ENCODE measurements at regions of chr2 and their contacts with region 1.

Region 1: DNA sequence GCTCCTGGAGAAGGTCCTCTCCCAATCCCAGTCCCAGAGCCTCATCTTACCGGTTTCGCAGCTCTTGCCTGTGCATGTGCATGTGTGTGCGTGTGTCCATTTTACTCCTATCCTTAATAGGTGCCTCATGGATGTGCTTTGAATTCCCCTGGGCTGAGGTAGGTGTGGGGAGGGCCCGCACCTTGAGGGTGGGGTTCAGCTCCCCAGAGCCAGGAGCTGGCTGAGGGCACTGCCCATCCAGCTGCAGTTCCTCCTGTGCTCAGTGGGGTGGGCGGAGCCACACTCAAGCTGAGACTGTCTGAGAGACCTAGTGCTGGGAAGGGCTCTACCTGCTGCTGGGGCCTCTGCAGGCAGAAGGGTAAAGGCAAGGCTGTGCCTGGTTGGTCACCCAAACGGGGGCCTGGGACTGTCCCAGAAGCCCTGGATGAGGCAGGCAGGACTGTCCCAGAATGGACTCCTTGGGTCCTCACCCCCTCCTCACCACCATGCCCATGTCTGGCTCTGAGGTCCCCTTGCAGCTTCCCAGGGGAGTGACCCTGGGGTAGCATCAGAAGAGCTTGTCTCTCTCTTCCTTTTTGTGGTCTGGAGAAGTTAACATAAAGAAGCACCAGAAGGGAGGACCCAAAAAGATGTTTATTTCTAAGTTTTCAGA is 8.9 kb downstream of the GDF7 start:
- DNase-seq: peak; percentile 51
- ATAC-seq: peak; percentile 82
- H3K4me3 Mint-ChIP-seq: peak overlapping the region; percentile 64
- H3K27ac Mint-ChIP-seq: peak overlapping the region; percentile 94
- H3K4me1 Mint-ChIP-seq: peaks cover 73% of the 10 kb centered on the region
- H3K27me3 Mint-ChIP-seq: no peaks in the 10 kb centered on the region
- CTCF ChIP-seq: no peak

Region 2: GRCh38 chr2:20781656-20782265 is 105.9 kb after region 1 on chr2:
- CTCF ChIA-PET with region 1: interaction called, 10 read pairs
- POLR2A ChIA-PET with region 1: no interaction called
- intact Hi-C with region 1: no loop called
- DNase-seq: no peak
- ATAC-seq: no peak
- H3K4me3 Mint-ChIP-seq: no peak overlapping the region
- H3K27ac Mint-ChIP-seq: no peak overlapping the region
- H3K4me1 Mint-ChIP-seq: no peaks in the 10 kb centered on the region
- H3K27me3 Mint-ChIP-seq: no peaks in the 10 kb centered on the region
- CTCF ChIP-seq: no peak

Region 3: GRCh38 chr2:20900052-20900636 is 224.3 kb after region 1 on chr2:
- CTCF ChIA-PET with region 1: no interaction called
- POLR2A ChIA-PET with region 1: interaction called, 10 read pairs
- intact Hi-C with region 1: no loop called
- DNase-seq: no peak
- ATAC-seq: no peak
- H3K4me3 Mint-ChIP-seq: no peak overlapping the region
- H3K27ac Mint-ChIP-seq: no peak overlapping the region
- H3K4me1 Mint-ChIP-seq: no peaks in the 10 kb centered on the region
- H3K27me3 Mint-ChIP-seq: peaks cover 26% of the 10 kb centered on the region
- CTCF ChIP-seq: no peak

Region 4: GRCh38 chr2:21146638-21147037 is 470.8 kb after region 1 on chr2:
- CTCF ChIA-PET with region 1: no interaction called
- POLR2A ChIA-PET with region 1: no interaction called
- intact Hi-C with region 1: no loop called
- DNase-seq: no peak
- ATAC-seq: no peak
- H3K4me3 Mint-ChIP-seq: no peak overlapping the region
- H3K27ac Mint-ChIP-seq: no peak overlapping the region
- H3K4me1 Mint-ChIP-seq: no peaks in the 10 kb centered on the region
- H3K27me3 Mint-ChIP-seq: peaks cover 6% of the 10 kb centered on the region
- CTCF ChIP-seq: no peak